Natural killer cell (primary cell): ENCODE measurements at regions of chr4 and their contacts with region 1.

Region 1: GRCh38 chr4:123390846-123391456 is 5.6 kb upstream of the SPRY1 start:
- DNase-seq: peak in 1 of 2 donors; percentile 51
- ATAC-seq: peak in 2 of 3 donors; percentile 39 to 44
- H3K4me3 ChIP-seq: no peak overlapping the region
- H3K4me3 Mint-ChIP-seq: no peak overlapping the region
- H3K27ac ChIP-seq: no peak overlapping the region
- H3K27ac Mint-ChIP-seq: no peak overlapping the region
- H3K4me1 ChIP-seq: no peaks in the 10 kb centered on the region
- H3K4me1 Mint-ChIP-seq: no peaks in the 10 kb centered on the region
- H3K27me3 ChIP-seq: no peaks in the 10 kb centered on the region
- H3K27me3 Mint-ChIP-seq: peaks cover 0 to 3% of the 10 kb centered on the region in 2 donors
- CTCF ChIP-seq: peak; percentile 72

Region 2: GRCh38 chr4:123299212-123299691 is 91.7 kb before region 1 on chr4:
- intact Hi-C with region 1: no loop called
- DNase-seq: no peak
- ATAC-seq: no peak
- H3K4me3 ChIP-seq: no peak overlapping the region
- H3K4me3 Mint-ChIP-seq: peak overlapping the region; percentile 65
- H3K27ac ChIP-seq: no peak overlapping the region
- H3K27ac Mint-ChIP-seq: peak overlapping the region; percentile 35 to 76
- H3K4me1 ChIP-seq: peaks cover 17% of the 10 kb centered on the region
- H3K4me1 Mint-ChIP-seq: peaks cover 51 to 60% of the 10 kb centered on the region in 2 donors
- H3K27me3 ChIP-seq: no peaks in the 10 kb centered on the region
- H3K27me3 Mint-ChIP-seq: peaks cover 0 to 8% of the 10 kb centered on the region in 2 donors
- CTCF ChIP-seq: no peak

Region 3: DNA sequence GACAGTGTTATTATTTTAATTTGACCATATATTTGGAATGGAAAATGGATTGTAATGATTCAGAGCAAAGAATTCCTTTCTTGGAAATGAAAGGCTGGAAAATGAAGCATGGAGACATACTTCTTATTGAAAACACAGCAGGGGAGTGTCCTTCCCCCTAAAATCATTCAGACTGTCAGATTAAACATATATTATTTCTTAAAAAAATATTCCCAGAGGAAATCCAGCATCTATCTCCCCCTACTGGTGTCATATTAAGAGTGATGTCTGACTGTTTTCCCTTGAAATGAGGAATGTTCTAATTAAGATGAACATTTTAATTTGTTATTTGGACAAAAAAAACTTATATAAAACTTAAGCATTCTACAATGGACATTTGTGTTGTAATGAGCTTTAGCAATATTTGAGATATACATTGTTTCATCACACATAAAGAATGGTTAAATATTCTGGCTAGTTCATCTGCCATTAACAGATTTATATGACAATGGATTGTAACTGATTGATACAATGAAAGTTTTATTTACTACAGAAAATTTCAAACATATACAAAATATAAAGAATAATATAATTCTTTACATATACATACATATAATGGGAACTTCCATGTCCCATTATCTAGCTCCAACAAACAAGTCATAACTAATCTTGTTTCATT is 270.3 kb after region 1 on chr4:
- intact Hi-C with region 1: loop called (anchors 1 kb)
- DNase-seq: peak in 1 of 2 donors; percentile 35
- ATAC-seq: no peak
- H3K4me3 ChIP-seq: no peak overlapping the region
- H3K4me3 Mint-ChIP-seq: no peak overlapping the region
- H3K27ac ChIP-seq: no peak overlapping the region
- H3K27ac Mint-ChIP-seq: no peak overlapping the region
- H3K4me1 ChIP-seq: no peaks in the 10 kb centered on the region
- H3K4me1 Mint-ChIP-seq: peaks cover 0 to 5% of the 10 kb centered on the region in 2 donors
- H3K27me3 ChIP-seq: no peaks in the 10 kb centered on the region
- H3K27me3 Mint-ChIP-seq: peaks cover 4 to 14% of the 10 kb centered on the region in 2 donors
- CTCF ChIP-seq: peak; percentile 65

Region 4: GRCh38 chr4:123731035-123731434 is 340.1 kb after region 1 on chr4:
- intact Hi-C with region 1: no loop called
- DNase-seq: no peak
- ATAC-seq: no peak
- H3K4me3 ChIP-seq: no peak overlapping the region
- H3K4me3 Mint-ChIP-seq: no peak overlapping the region
- H3K27ac ChIP-seq: no peak overlapping the region
- H3K27ac Mint-ChIP-seq: no peak overlapping the region
- H3K4me1 ChIP-seq: no peaks in the 10 kb centered on the region
- H3K4me1 Mint-ChIP-seq: no peaks in the 10 kb centered on the region
- H3K27me3 ChIP-seq: no peaks in the 10 kb centered on the region
- H3K27me3 Mint-ChIP-seq: peaks cover 4 to 9% of the 10 kb centered on the region in 2 donors
- CTCF ChIP-seq: no peak

Region 5: DNA sequence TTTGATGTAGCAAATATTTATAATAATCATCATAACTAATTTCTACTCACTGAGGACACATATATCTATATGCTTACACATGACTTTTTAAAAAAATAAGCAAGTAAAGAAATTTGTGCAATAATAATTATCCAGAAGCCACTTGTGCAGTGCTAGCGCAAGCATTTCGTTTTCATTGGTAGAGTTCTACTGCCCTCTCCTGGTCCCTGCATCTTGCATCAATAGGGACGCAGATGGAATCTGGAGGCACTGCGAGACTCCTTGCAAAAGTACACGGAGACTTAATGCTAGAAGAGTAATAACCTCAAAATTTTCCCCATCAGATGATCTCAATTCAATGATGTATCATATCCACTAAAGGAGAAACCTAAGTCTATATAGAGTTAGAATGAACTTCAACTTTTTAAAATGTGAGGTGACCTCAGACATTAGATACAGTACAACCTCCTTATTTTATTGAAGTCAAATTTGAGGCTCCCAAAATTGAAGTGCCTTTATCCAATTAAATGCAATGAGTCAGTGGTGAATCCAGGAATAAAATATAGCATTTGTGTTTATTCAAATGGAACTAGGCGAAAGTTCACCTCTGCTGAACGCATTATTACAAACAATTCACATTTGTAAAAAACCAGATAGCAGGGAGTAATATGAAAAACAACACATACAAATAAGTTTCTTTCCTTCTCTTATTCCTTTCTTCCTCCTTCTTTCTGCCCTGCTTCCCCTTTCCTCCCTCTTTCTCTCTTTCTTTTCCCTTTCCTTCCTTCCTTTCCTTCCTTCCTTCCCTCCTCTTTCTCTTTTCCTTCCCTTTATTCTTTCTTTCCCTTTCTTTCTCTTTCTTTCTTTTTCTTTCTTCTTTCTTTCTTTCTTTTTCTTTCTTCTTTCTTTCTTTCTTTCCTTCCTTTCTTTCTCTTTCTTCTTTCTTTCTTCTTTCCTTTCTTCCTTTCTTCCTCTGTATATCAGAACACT is 871.5 kb after region 1 on chr4:
- intact Hi-C with region 1: loop called (anchors 5 kb)
- DNase-seq: peak in 1 of 2 donors; percentile 62
- ATAC-seq: peak; percentile 46 to 61 (median 49)
- H3K4me3 ChIP-seq: no peak overlapping the region
- H3K4me3 Mint-ChIP-seq: no peak overlapping the region
- H3K27ac ChIP-seq: no peak overlapping the region
- H3K27ac Mint-ChIP-seq: no peak overlapping the region
- H3K4me1 ChIP-seq: no peaks in the 10 kb centered on the region
- H3K4me1 Mint-ChIP-seq: no peaks in the 10 kb centered on the region
- H3K27me3 ChIP-seq: no peaks in the 10 kb centered on the region
- H3K27me3 Mint-ChIP-seq: no peaks in the 10 kb centered on the region
- CTCF ChIP-seq: peak; percentile 23